Activated naive CD4-positive, alpha-beta T cell treated with anti-CD3 and anti-CD28 coated beads for 36 hours (primary cell): ENCODE measurements at regions of chr1 and their contacts with region 1.

Region 1: GRCh38 chr1:156338180-156338973 is at the starts of genes CCT3 and TSACC:
- DNase-seq: peak; percentile 99
- H3K4me3 Mint-ChIP-seq: peak within 1 kb of the TSS; percentile 97
- H3K27ac Mint-ChIP-seq: peak within 1 kb of the TSS; percentile 93
- H3K4me1 Mint-ChIP-seq: peaks cover 32% of the 10 kb centered on the region
- H3K27me3 Mint-ChIP-seq: no peaks in the 10 kb centered on the region
- total RNA-seq, gene CCT3: 332 to 349 TPM
- total RNA-seq, gene TSACC: 0.57 TPM in 1 of 2 experiments, not detected in the other

Region 2: DNA sequence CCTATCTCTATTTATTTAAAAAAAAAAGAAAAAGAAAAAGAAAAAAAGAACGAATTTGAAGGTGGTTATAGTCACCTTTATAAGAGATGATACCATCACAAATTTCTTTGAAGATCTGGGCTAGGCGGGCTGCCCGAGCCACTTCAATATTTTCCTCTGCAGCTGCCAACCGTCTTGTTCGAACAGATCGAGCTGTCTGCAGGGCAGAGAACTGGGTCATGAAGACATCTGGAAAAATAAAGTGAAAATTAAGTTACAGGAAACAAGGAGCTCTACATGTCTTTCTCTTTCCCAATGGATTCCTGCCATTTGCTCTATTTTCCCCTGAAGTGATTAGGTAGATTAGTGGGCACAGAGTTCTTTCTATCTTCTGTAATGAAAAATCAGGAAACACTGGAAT is 985.7 kb before region 1 on chr1:
- CTCF ChIA-PET with region 1: no interaction called
- intact Hi-C with region 1: no loop called
- DNase-seq: no peak
- H3K4me3 Mint-ChIP-seq: no peak overlapping the region
- H3K27ac Mint-ChIP-seq: no peak overlapping the region
- H3K4me1 Mint-ChIP-seq: no peaks in the 10 kb centered on the region
- H3K27me3 Mint-ChIP-seq: no peaks in the 10 kb centered on the region

Region 3: GRCh38 chr1:155934097-155934935 is 404.1 kb before region 1 on chr1 and contains the start of gene KHDC4:
- CTCF ChIA-PET with region 1: no interaction called
- intact Hi-C with region 1: loop called (anchors 1 kb)
- DNase-seq: peak; percentile 97
- H3K4me3 Mint-ChIP-seq: no peak within 1 kb of the TSS
- H3K27ac Mint-ChIP-seq: no peak within 1 kb of the TSS
- H3K4me1 Mint-ChIP-seq: peaks cover 46% of the 10 kb centered on the region
- H3K27me3 Mint-ChIP-seq: no peaks in the 10 kb centered on the region
- total RNA-seq, gene KHDC4: 82.3 to 87.2 TPM

Region 4: DNA sequence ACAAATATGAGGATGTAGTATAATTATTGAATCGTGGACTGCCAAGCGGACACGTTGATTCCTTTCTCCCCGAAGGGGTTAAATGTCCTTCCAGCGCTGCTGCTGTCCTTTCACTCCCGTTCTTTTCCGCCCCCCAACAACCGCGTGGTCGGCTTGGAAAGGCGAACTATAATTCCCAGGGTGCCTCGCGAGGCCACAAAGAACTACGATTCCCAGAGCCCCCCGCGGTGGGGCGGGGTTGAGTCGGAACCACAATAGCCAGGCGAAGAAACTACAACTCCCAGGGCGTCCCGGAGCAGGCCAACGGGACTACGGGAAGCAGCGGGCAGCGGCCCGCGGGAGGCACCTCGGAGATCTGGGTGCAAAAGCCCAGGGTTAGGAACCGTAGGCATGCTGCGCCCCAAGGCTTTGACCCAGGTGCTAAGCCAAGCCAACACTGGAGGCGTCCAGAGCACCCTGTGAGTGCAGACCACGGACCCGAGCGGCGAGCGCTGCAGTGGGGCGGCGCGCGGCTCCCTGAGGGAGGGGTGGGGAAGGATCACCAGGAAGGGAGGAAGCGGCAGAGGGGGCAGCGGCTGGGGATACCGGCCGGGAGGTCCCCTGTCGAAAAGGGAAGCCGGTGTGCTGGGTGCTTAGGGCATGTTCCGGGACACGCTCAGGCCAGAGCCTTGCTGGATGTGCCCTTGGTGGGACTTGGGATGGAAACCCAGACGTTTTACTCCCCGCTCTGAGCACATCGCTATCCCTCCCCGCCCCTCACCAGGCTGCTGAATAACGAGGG is 283.7 kb before region 1 on chr1 and contains the start of gene LAMTOR2:
- CTCF ChIA-PET with region 1: no interaction called
- intact Hi-C with region 1: loop called (anchors 1 kb)
- DNase-seq: peak; percentile 98
- H3K4me3 Mint-ChIP-seq: peak within 1 kb of the TSS; percentile 92
- H3K27ac Mint-ChIP-seq: peak within 1 kb of the TSS; percentile 93
- H3K4me1 Mint-ChIP-seq: peaks cover 24% of the 10 kb centered on the region
- H3K27me3 Mint-ChIP-seq: no peaks in the 10 kb centered on the region
- total RNA-seq, gene LAMTOR2: 54.9 to 55.9 TPM

Region 5: GRCh38 chr1:156226116-156226538 is 112.2 kb before region 1 on chr1:
- CTCF ChIA-PET with region 1: interaction called, 3 read pairs
- intact Hi-C with region 1: loop called (anchors 1 kb)
- DNase-seq: peak; percentile 59
- H3K4me3 Mint-ChIP-seq: no peak overlapping the region
- H3K27ac Mint-ChIP-seq: peak overlapping the region; percentile 100
- H3K4me1 Mint-ChIP-seq: peaks cover 59% of the 10 kb centered on the region
- H3K27me3 Mint-ChIP-seq: no peaks in the 10 kb centered on the region

Region 6: GRCh38 chr1:156245451-156246232 is 92.7 kb before region 1 on chr1:
- CTCF ChIA-PET with region 1: no interaction called
- intact Hi-C with region 1: no loop called
- DNase-seq: peak; percentile 50
- H3K4me3 Mint-ChIP-seq: peak overlapping the region; percentile 66
- H3K27ac Mint-ChIP-seq: no peak overlapping the region
- H3K4me1 Mint-ChIP-seq: peaks cover 11% of the 10 kb centered on the region
- H3K27me3 Mint-ChIP-seq: no peaks in the 10 kb centered on the region

Region 7: GRCh38 chr1:156319664-156320063 is 18.7 kb before region 1 on chr1:
- CTCF ChIA-PET with region 1: interaction called, 23 read pairs
- intact Hi-C with region 1: no loop called
- DNase-seq: peak; percentile 38
- H3K4me3 Mint-ChIP-seq: no peak overlapping the region
- H3K27ac Mint-ChIP-seq: no peak overlapping the region
- H3K4me1 Mint-ChIP-seq: no peaks in the 10 kb centered on the region
- H3K27me3 Mint-ChIP-seq: no peaks in the 10 kb centered on the region

Region 8: GRCh38 chr1:156456622-156457465 is 118.5 kb after region 1 on chr1:
- CTCF ChIA-PET with region 1: no interaction called
- intact Hi-C with region 1: loop called (anchors 1 kb)
- DNase-seq: peak; percentile 100
- H3K4me3 Mint-ChIP-seq: peak overlapping the region; percentile 86
- H3K27ac Mint-ChIP-seq: peak overlapping the region; percentile 97
- H3K4me1 Mint-ChIP-seq: peaks cover 10% of the 10 kb centered on the region
- H3K27me3 Mint-ChIP-seq: no peaks in the 10 kb centered on the region

Region 9: DNA sequence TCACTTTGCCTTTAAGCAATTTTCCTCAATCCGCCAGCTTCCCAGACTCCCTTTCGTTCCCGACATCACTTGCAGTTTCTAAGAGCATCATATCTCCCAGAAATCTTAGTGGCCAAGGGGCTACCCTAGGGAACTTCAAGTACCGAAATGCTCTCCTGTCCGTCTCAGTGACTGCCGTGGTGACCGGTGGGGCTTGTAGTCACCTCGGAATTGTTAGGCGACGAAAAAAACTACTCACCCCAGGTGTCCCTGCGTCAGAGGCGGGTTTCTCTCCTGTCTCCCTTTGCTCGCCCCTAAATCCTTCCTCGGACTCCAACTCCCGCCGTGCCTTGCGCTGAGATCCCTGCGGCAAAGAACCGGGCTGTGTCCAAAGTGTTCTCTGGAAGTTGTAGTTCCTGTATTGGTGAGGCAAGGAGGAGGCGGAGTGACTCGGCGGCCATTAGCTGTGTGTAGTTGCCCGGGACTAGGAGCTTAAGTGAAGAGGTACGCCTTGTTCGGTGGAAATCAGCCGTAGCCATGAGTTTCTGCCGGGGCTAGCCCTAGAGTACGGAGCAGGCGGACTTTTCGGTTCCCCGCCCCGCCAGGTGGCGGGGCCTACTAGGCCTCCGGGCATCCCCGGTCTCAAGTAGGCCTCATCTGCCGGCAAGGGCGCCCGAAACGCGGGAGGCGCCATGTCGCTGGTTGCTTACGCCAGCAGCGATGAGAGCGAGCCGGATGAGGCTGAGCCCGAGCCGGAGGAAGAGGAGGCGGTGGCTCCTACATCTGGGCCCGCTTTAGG is 428.9 kb after region 1 on chr1 and contains the start of gene PRCC:
- CTCF ChIA-PET with region 1: no interaction called
- intact Hi-C with region 1: loop called (anchors 2 kb)
- DNase-seq: peak; percentile 99
- H3K4me3 Mint-ChIP-seq: no peak within 1 kb of the TSS
- H3K27ac Mint-ChIP-seq: no peak within 1 kb of the TSS
- H3K4me1 Mint-ChIP-seq: peaks cover 39% of the 10 kb centered on the region
- H3K27me3 Mint-ChIP-seq: no peaks in the 10 kb centered on the region
- total RNA-seq, gene PRCC: 55.2 to 55.8 TPM